PC-3 (cell line): ENCODE measurements at regions of chrX and their contacts with region 1.

Region 1: GRCh38 chrX:150898343-150899190 is at the start of gene CD99L2:
- DNase-seq: peak; percentile 92
- ATAC-seq: peak; percentile 86
- H3K4me3 ChIP-seq: peak within 1 kb of the TSS; percentile 92
- H3K27ac ChIP-seq: peak within 1 kb of the TSS; percentile 11; the same call in 1 of the 2 replicates
- H3K4me1 ChIP-seq: peaks cover 9% of the 10 kb centered on the region; the same call in 1 of the 2 replicates
- H3K27me3 ChIP-seq: no peaks in the 10 kb centered on the region
- CTCF ChIP-seq: no peak
- total RNA-seq, gene CD99L2: 9.4 and 10.9 TPM in 2 replicates

Region 2: DNA sequence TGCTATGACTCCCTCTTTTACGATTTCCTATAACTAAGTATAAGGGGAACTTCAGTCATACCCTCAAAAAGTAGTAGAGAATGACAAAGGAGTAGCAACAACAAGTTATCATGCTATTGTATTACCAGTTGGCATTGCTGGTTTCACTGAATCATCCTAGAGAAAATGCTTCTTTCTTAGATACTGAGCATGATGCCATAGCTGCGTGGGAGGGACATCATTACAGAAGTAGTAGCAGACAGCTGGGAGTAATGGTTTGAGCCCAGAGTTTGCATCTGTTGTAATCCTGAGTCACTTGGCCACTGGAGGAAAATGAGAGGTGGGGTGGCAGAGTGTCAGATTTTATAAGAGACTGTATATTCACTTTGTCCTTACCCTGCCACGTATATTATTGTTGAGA is 166.8 kb before region 1 on chrX:
- CTCF ChIA-PET with region 1: no interaction called
- POLR2A ChIA-PET with region 1: no interaction called
- intact Hi-C with region 1: no loop called
- DNase-seq: peak; percentile 71
- ATAC-seq: peak; percentile 91
- H3K4me3 ChIP-seq: no peak overlapping the region
- H3K27ac ChIP-seq: peak overlapping the region; percentile 61
- H3K4me1 ChIP-seq: peaks cover 7% of the 10 kb centered on the region
- H3K27me3 ChIP-seq: no peaks in the 10 kb centered on the region
- CTCF ChIP-seq: no peak

Region 3: GRCh38 chrX:150772150-150772970 is 126.2 kb before region 1 on chrX:
- CTCF ChIA-PET with region 1: interaction called, 14 read pairs
- POLR2A ChIA-PET with region 1: no interaction called
- intact Hi-C with region 1: no loop called
- DNase-seq: peak; percentile 81
- ATAC-seq: peak; percentile 95
- H3K4me3 ChIP-seq: no peak overlapping the region
- H3K27ac ChIP-seq: no peak overlapping the region
- H3K4me1 ChIP-seq: peaks cover 1% of the 10 kb centered on the region; the same call in 1 of the 2 replicates
- H3K27me3 ChIP-seq: no peaks in the 10 kb centered on the region
- CTCF ChIP-seq: peak; percentile 84

Region 4: DNA sequence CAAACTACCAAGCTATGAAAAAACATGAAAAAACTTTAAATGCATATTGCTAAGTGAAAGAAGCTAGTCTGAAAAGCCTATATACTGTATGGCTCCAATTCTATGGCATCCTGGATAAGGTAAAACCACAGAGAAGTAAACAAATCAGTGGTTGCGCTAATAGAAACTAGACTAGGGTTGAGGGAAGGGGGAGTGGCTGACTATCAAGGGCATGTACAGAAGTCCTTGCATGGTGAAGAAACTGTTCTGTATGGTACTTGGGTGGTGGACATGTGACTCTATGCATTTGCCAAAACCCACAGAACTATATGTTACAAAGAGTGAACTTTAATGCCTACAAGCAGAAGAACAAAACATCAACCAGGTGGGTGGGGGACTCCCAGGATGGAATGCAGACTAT is 108.5 kb before region 1 on chrX:
- CTCF ChIA-PET with region 1: no interaction called
- POLR2A ChIA-PET with region 1: no interaction called
- intact Hi-C with region 1: loop called (anchors 10 kb)
- DNase-seq: no peak
- ATAC-seq: no peak
- H3K4me3 ChIP-seq: no peak overlapping the region
- H3K27ac ChIP-seq: no peak overlapping the region
- H3K4me1 ChIP-seq: no peaks in the 10 kb centered on the region
- H3K27me3 ChIP-seq: no peaks in the 10 kb centered on the region
- CTCF ChIP-seq: no peak

Region 5: GRCh38 chrX:150982788-150983520 is 84.4 kb after region 1 on chrX and contains the start of gene HMGB3:
- CTCF ChIA-PET with region 1: no interaction called
- POLR2A ChIA-PET with region 1: no interaction called
- intact Hi-C with region 1: loop called (anchors 1 kb)
- DNase-seq: peak; percentile 95
- ATAC-seq: peak; percentile 97
- H3K4me3 ChIP-seq: peak within 1 kb of the TSS; percentile 77
- H3K27ac ChIP-seq: peak within 1 kb of the TSS; percentile 36; the same call in 1 of the 2 replicates
- H3K4me1 ChIP-seq: peaks cover 15% of the 10 kb centered on the region
- H3K27me3 ChIP-seq: no peaks in the 10 kb centered on the region
- CTCF ChIP-seq: no peak
- total RNA-seq, gene HMGB3: 57.2 and 95.0 TPM in 2 replicates